ENCODE measurements at regions of chr4 and their contacts with region 1.

Region 1: GRCh38 chr4:103011378-103012025 is 8.0 kb downstream of the SLC9B1 start:
- DNase-seq: peak; percentile 62
- ATAC-seq: peak; percentile 88
- H3K4me3 ChIP-seq: no peak overlapping the region
- H3K27ac ChIP-seq: peak overlapping the region; percentile 20
- H3K4me1 ChIP-seq: peaks cover 14% of the 10 kb centered on the region
- H3K27me3 ChIP-seq: no peaks in the 10 kb centered on the region
- CTCF ChIP-seq: no peak

Region 2: DNA sequence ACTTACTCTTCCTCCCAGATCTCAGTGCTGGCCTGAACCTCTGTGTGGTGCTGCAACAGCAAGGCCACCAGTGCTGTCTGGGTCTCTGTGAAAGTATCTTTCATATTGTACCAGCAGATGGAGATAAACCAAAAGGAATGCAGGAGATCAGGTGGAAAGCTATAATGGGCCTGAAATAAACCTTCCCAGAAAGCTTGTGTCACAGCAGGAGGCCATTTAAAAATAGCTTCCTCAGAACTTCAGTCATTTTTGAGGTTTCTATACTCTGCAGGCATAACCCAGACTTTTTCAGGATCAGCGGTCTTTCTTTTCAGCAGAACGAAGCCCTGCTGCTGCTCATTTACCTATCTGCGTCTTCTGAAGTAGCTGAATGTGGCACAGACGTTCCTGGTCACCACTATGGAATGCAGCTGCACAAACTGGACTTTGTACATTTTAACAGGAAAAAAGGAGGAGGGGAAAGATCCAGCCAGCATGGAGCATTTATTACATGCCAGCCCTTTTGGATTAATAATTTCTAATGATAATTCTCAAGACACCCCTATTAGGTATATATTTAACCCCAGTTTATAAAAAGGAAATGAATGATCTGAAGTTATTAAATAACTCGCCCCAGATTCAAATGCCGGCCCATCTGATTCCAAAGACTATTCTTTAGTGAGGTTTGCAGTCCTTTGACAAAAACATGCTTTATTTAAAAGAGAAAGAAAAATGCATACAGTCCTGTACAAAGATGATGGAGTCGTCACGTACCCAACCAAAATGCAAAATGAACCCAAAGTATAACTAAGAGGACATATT is 390.6 kb before region 1 on chr4:
- intact Hi-C with region 1: loop called (anchors 5 kb)
- DNase-seq: no peak
- ATAC-seq: peak; percentile 89
- H3K4me3 ChIP-seq: no peak overlapping the region
- H3K27ac ChIP-seq: peak overlapping the region; percentile 39
- H3K4me1 ChIP-seq: no peaks in the 10 kb centered on the region
- H3K27me3 ChIP-seq: no peaks in the 10 kb centered on the region
- CTCF ChIP-seq: peak; percentile 46